ENCODE measurements at regions of chr9 and their contacts with region 1.

Region 1: GRCh38 chr9:136283291-136284235 is 20.3 kb downstream of the CCDC187 start:
- DNase-seq: peak; percentile 75 to 85 (median 80)
- ATAC-seq: peak; percentile 89 to 97 (median 94)
- H3K4me3 ChIP-seq: peak overlapping the region in 10 of 12 donors; percentile 4 to 52 (median 34)
- H3K27ac ChIP-seq: peak overlapping the region in 7 of 12 donors; percentile 36 to 62 (median 54)
- H3K4me1 ChIP-seq: peaks cover 0 to 10% (median 5%) of the 10 kb centered on the region in 12 donors
- H3K27me3 ChIP-seq: peaks cover 0 to 30% (median 11%) of the 10 kb centered on the region in 9 donors
- CTCF ChIP-seq: peak; percentile 77 to 90 (median 82)
- POLR2A ChIP-seq: no peak

Region 2: DNA sequence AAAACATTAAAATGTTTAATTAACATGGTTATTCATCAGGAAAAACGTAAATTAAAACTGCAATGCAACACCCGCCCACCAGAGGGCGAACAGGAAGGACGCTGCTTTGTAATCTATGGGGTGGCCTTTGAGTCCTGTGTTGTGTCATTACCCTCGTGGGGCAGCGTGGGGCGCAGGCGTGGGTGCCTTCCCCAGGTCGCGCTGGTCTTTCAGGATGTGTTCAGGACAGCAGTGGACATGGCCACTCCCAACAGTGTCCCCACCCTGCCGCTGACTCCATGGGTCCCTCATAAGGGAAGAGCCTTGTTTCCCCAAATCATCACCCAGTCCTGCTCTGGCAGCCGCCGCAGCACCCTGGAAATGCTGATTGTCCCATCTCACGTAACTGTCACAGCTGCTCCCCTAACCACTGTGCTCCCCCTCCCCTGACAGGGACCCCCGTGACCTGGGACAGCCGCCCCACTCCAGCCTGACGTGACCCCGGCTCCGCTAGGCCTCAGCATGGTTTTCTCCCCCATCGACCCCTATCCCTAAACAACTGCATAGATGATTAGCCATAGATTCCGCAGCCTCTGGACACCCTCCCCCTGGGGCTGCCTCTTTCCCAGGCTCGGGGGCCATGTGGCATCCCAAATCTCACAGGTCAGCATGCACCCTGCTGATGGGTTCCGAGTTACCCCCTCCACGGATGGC is 680.6 kb before region 1 on chr9:
- intact Hi-C with region 1: loop called in 4 of 10 experiments (anchors 5 kb)
- DNase-seq: peak in 3 of 5 donors; percentile 21 to 46 (median 25)
- ATAC-seq: peak; percentile 26 to 50 (median 26)
- H3K4me3 ChIP-seq: no peak overlapping the region
- H3K27ac ChIP-seq: no peak overlapping the region
- H3K4me1 ChIP-seq: no peaks in the 10 kb centered on the region
- H3K27me3 ChIP-seq: peaks cover 0 to 13% (median 2%) of the 10 kb centered on the region in 9 donors
- CTCF ChIP-seq: peak; percentile 61 to 87 (median 70)
- POLR2A ChIP-seq: no peak

Region 3: GRCh38 chr9:136133191-136133958 is 150.2 kb before region 1 on chr9:
- intact Hi-C with region 1: loop called in 2 of 10 experiments (anchors 2 kb)
- DNase-seq: peak in 1 of 5 donors; percentile 60
- ATAC-seq: peak in 3 of 4 donors; percentile 23 to 44 (median 38)
- H3K4me3 ChIP-seq: peak overlapping the region; percentile 6 to 53 (median 47)
- H3K27ac ChIP-seq: no peak overlapping the region
- H3K4me1 ChIP-seq: peaks cover 0 to 33% (median 5%) of the 10 kb centered on the region in 12 donors
- H3K27me3 ChIP-seq: peaks cover 5 to 58% (median 30%) of the 10 kb centered on the region in 9 donors
- CTCF ChIP-seq: peak in 10 of 12 donors; percentile 23 to 54 (median 38)
- POLR2A ChIP-seq: no peak

Region 4: DNA sequence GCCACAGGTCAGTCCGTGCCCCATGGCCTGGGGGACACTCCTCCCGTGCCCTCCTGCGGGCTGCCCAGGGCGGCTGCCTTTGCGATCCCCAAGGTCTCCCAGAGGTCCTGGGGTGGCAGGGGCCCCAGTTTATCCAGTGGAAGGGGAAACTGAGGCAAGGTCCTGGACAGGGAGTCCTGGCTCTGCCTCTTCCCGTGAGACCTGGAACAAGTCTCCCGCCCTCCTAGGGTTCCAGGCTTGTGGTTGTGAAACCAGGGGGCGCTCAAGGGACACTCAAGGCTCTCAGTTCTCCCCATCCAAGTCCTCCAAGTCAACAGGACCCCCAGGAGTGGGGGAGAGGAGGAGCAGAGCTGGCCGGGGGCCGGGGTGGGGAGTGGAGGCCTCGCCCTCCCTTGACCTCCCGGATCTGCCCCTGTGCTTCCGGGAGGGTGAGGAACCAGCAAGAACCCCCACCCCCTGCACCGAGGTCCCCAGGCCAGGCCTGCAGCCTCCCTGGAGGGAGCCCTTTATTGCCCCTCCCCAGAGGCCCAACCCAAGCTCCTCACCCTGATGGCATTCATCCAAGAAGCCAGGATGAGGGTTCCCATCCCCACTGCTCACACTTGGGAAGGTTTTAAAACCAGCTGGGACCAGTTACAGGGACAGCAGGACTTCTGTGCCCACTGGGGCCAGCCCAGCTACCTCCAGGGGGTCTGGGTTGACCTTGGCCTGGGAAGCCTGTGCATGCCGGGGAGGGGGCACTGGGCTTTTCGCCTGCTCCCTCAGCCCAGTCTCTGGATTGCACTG is 140.2 kb before region 1 on chr9:
- intact Hi-C with region 1: loop called in 4 of 10 experiments (anchors 5 to 10 kb)
- DNase-seq: peak in 2 of 5 donors; percentile 20 to 28
- ATAC-seq: no peak
- H3K4me3 ChIP-seq: no peak overlapping the region
- H3K27ac ChIP-seq: no peak overlapping the region
- H3K4me1 ChIP-seq: no peaks in the 10 kb centered on the region
- H3K27me3 ChIP-seq: peaks cover 0 to 60% (median 17%) of the 10 kb centered on the region in 9 donors
- CTCF ChIP-seq: peak in 8 of 12 donors; percentile 10 to 43 (median 28)
- POLR2A ChIP-seq: no peak

Region 5: DNA sequence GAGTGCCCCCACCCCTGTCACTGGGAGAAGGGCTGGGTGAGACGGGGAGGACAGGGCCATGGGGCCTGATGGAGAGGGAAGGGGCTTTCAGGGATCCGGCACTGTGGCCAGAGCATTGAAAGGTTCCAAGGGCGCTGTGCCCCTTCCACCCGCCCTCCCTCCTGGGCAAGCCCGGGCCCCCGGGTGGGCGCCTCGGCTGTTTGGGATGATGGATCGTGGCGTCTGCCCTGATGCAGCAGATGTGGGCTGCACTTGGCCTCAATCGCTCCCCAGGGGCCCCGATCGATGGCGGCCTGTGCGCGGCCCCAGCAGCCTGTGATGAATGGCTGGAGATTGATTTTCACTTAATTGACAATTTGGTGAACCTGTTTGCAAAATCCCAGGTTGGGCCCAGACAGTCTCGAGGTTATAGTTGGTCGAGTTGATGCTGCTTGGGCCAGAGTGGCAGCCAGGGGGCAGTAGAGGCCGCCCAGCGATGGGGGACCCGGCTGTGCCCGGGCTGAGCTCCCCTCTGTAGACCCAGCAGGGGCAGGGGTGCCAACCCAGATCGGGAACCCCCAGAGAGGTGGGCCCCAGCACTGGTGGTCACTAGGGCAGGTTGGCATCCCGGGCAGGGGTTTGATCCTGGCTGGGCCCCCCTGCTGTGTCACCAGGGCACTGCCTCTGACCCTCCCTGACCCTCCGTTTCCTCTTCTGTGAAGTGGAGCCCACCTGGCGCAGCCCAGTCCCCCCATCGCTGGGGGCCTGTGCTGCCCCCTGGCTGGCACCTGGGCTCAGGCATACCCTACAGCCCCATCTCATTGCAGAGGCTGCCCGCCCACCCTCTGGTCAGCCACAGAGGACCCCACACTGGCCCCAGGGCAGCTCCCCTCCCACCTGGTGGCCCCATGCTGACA is 113.3 kb before region 1 on chr9:
- intact Hi-C with region 1: loop called in 8 of 10 experiments (anchors 1 to 5 kb)
- DNase-seq: peak in 2 of 5 donors; percentile 21 to 68
- ATAC-seq: peak in 3 of 4 donors; percentile 52 to 62 (median 57)
- H3K4me3 ChIP-seq: no peak overlapping the region
- H3K27ac ChIP-seq: no peak overlapping the region
- H3K4me1 ChIP-seq: no peaks in the 10 kb centered on the region
- H3K27me3 ChIP-seq: peaks cover 0 to 46% (median 14%) of the 10 kb centered on the region in 9 donors
- CTCF ChIP-seq: peak; percentile 48 to 73 (median 60)
- POLR2A ChIP-seq: no peak

Region 6: DNA sequence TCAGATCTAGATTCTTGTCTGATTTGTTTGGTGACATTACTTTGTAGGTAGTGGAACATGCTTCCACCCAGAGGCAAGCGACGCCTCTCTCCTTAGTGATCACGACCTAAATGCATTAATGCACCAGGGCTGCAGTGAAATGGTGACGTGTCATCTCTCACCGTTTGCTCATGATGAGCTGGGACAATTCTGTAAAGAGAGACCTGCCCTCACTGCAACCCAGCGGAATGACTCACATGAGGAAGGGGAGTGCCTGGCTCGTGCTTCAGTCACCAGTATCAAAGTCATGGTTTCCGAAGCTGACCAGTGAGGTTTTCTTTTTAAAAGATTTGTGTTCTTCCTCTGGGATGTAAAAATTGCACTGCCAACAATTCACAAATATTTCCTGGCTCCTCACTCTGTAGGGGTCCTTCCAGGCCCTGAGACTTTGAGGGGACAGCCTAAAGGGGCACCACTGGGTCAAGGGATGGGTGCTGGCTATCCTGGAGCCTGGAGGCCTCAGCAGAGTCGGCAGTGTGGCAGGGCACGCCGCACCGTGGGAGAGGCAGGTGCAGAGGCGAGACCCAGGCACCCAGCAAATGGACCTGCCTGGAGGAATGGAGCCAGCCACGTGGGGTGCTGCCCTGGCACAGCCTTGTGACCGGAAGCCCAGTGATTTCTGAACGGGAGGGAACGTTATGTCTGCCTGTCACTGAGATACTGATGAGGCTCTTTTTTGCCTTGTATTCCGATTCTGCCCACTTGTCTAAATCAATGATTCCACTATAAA is 55.3 kb before region 1 on chr9:
- intact Hi-C with region 1: no loop called
- DNase-seq: no peak
- ATAC-seq: no peak
- H3K4me3 ChIP-seq: no peak overlapping the region
- H3K27ac ChIP-seq: no peak overlapping the region
- H3K4me1 ChIP-seq: peaks cover 0 to 8% (median 0%) of the 10 kb centered on the region in 12 donors
- H3K27me3 ChIP-seq: no peaks in the 10 kb centered on the region
- CTCF ChIP-seq: no peak
- POLR2A ChIP-seq: no peak

Measured in heart left ventricle (tissue), 16 donors.